Motor neuron (in vitro differentiated cells): ENCODE measurements at regions of chr12 and their contacts with region 1.

Region 1: DNA sequence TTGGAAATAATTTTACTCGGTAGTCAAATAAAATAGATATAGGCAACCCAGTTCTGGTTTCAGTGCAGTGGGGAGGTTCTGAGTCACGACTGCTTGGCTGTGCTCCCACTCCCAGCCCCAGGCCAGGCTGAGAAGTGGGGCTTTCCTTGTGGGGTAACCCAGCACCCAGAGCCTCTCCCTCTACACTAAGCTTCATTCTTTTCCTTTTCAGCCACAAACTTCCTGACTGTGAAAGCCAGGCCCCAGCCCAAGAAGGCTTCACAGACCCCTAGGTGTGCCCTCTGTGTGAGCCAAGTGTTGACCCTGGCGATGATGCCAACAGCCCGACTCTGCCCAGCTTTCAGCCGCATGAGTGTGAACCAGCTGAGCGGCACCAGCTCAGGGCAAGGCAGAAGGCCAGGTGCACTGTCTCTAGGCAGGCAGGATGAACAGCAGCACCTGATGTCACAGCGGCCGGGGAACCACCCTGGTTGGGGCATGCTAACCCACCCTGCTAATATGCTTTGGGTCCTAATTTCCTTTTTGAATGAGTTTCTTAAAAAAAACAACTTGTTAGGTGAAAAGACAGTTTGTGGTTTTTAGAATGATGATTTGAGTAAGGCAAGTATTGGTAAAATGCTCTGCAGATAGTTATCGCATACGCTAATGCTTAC is 42.2 kb upstream of the ATP23 start:
- ATAC-seq: peak in 1 of 8 experiments; percentile 7
- H3K4me3 ChIP-seq: no peak overlapping the region
- H3K27ac ChIP-seq: no peak overlapping the region
- H3K4me1 ChIP-seq: peaks cover 33 to 37% of the 10 kb centered on the region in 2 donors

Region 2: DNA sequence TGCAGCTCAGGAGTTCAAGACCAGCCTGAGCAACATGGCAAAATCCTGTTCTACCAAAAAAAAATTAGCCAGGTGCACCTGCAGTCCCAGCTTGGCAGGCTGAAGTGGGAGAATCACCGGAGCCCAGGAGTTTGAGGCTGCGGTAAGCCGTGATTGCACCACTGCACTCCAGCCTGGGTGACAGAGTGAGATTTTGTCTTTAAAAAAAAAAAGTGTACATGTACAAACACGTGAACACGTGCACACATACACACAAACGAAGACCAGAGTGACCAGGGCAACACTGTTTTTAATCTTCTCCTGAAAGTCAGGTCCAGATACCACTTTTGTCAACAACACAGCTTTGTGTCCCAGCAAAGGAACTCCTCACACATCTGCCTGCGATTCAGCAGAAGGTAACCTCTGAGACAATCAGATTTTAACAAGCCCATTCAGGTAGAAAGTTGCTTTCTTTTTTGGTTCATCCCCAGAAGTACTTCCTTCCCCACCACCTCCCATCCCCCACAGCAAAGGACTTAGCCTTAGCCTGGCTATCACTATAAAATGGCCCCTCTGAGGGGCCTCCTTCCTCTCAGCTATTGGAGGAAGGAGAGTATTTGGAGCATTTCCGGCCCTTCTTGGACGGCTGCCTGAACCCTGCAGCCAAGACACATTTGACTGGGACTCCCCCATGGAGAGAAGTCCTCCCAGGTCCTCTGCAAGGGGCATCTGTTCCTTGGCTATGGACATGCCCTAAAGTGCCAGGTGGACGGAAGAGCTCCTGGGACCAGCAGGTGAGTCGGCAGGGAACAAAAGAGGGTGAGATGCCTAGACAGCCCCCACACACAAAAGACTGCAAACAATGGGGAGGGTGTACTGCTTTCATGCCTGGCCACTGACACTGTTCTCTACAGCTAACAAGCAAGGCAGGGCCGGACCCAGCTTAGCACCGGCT is 62.4 kb before region 1 on chr12:
- in situ Hi-C with region 1: loop called in 3 of 9 experiments (anchors 5 to 10 kb)
- ATAC-seq: peak; percentile 11 to 66 (median 50)
- H3K4me3 ChIP-seq: no peak overlapping the region
- H3K27ac ChIP-seq: peak overlapping the region in 1 of 2 donors; percentile 35
- H3K4me1 ChIP-seq: peaks cover 51 to 79% of the 10 kb centered on the region in 2 donors

Region 3: GRCh38 chr12:57846577-57847319 is 52.4 kb before region 1 on chr12 and contains the start of gene CTDSP2:
- in situ Hi-C with region 1: loop called in 1 of 9 experiments (anchors 10 kb)
- ATAC-seq: peak; percentile 47 to 78 (median 68)
- H3K4me3 ChIP-seq: peak within 1 kb of the TSS; percentile 74 to 90 (median 79)
- H3K27ac ChIP-seq: peak within 1 kb of the TSS; percentile 98 to 99
- H3K4me1 ChIP-seq: peaks cover 33 to 39% of the 10 kb centered on the region in 2 donors
- total RNA-seq, gene CTDSP2: 22.2 to 85.0 (median 36.1) TPM